ENCODE measurements at regions of chr1 and their contacts with region 1.

Region 1: GRCh38 chr1:68016381-68016780 is 34.0 kb downstream of the DIRAS3 start:
- DNase-seq: no peak
- H3K4me3 ChIP-seq: no peak overlapping the region
- H3K27ac ChIP-seq: no peak overlapping the region
- H3K4me1 ChIP-seq: no peaks in the 10 kb centered on the region
- H3K27me3 ChIP-seq: no peaks in the 10 kb centered on the region
- CTCF ChIP-seq: no peak

Region 2: GRCh38 chr1:68600049-68600661 is 583.8 kb after region 1 on chr1:
- CTCF ChIA-PET with region 1: interaction called, 15 read pairs
- POLR2A ChIA-PET with region 1: no interaction called
- intact Hi-C with region 1: no loop called
- DNase-seq: peak; percentile 26
- H3K4me3 ChIP-seq: no peak overlapping the region
- H3K27ac ChIP-seq: no peak overlapping the region
- H3K4me1 ChIP-seq: no peaks in the 10 kb centered on the region
- H3K27me3 ChIP-seq: no peaks in the 10 kb centered on the region
- CTCF ChIP-seq: peak; percentile 76

Region 3: GRCh38 chr1:68979891-68980290 is 963.5 kb after region 1 on chr1:
- CTCF ChIA-PET with region 1: no interaction called
- POLR2A ChIA-PET with region 1: no interaction called
- intact Hi-C with region 1: no loop called
- DNase-seq: no peak
- H3K4me3 ChIP-seq: no peak overlapping the region
- H3K27ac ChIP-seq: no peak overlapping the region
- H3K4me1 ChIP-seq: no peaks in the 10 kb centered on the region
- H3K27me3 ChIP-seq: no peaks in the 10 kb centered on the region
- CTCF ChIP-seq: no peak